Right ventricle myocardium inferior (tissue), 1 donor: ENCODE measurements at regions of chr18 and their contacts with region 1.

Region 1: GRCh38 chr18:44679056-44679905 is 1.4 kb upstream of the SETBP1 start:
- DNase-seq: peak; percentile 93
- ATAC-seq: peak; percentile 98

Region 2: GRCh38 chr18:44579028-44579702 is 100.1 kb before region 1 on chr18:
- intact Hi-C with region 1: no loop called
- DNase-seq: no peak
- ATAC-seq: no peak

Region 3: DNA sequence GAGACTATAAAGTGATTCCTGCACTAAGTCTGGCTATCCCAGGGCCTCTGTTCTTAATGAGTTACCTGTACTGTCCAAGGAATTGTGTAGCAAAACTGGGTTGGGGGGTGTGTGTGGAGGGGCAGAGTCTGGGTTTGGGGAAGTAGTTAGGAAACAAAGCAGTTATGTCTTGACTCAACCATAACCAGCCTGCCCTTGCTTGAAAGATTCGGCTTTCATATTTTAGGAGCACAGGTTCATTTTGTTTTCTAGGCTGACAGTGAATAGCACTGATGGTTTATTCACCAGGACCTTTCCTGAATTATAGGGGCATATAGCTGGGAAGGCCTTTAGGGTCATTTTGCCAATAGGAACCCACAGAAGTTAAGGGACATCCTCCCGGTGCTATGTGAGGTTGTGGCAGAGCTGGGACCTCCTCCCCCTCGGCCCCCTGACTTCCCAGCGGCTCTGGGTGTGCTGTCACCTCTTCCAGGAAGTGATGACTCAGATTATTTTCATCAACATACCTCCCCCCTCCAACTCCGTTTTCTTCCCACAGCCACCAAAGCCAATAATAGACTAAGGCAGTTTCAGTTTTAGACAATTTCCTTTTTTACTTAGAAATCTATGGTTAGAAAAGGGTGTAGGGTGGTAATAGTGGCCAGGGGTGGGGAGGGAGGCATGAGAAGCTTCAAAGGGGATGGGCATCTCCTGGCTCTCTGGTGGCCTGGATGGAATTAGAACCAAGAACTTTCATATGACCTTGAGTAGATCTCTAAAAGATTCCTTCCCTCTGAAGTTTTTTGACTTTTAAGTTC is 46.2 kb after region 1 on chr18:
- intact Hi-C with region 1: loop called (anchors 2 kb)
- DNase-seq: no peak
- ATAC-seq: peak; percentile 74

Region 4: GRCh38 chr18:44789710-44790109 is 110.4 kb after region 1 on chr18:
- intact Hi-C with region 1: loop called (anchors 5 kb)
- DNase-seq: no peak
- ATAC-seq: peak; percentile 40

Region 5: DNA sequence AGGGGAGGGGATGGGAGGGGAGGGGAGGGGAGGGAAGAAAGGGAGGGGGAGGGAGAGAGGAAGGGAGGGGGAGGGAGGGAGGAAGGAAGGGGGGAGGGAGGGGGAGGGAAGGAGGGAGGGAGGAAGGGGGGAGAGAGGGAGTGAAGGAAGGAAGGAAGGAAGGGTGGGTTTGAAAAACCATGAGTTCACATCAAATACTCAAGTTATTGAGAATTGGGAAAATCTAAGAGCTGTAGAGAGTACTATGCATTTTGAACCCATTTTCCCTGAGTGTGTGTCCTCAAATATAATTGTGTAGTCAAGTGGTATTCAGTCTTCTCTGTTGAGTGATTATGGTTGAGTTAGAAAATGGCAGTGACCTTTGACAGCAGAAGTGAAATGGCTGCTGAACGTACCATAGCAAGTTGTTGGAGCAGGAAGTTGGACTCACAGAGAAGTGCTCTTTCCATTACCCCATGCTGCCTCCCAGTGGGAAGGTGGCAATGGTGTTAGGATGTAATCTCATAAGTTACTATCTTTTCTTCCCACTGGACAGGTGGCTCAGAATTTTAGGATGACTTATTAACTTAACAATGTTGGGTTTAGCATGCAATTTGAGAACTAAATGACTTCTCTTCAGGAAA is 216.0 kb after region 1 on chr18:
- intact Hi-C with region 1: loop called (anchors 2 kb)
- DNase-seq: peak; percentile 65
- ATAC-seq: peak; percentile 59

Region 6: DNA sequence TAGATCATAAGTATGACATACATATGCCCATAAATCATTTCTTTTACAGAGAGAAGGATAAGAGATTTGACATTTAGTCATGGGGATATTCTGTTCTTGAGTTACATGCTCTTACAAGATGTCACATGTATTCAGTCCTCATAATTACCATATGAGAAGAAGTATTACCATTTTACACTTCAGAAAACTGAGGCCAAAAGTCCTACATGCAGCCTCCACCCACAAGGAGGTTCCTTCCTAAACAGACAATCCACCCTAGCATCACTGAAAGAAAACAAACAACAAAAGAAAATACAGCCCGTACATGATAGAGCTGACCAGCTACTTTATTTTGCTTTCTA is 336.5 kb after region 1 on chr18:
- intact Hi-C with region 1: loop called (anchors 5 kb)
- DNase-seq: no peak
- ATAC-seq: peak; percentile 2